CD8-positive, alpha-beta T cell (primary cell): ENCODE measurements at regions of chr9 and their contacts with region 1.

Region 1: DNA sequence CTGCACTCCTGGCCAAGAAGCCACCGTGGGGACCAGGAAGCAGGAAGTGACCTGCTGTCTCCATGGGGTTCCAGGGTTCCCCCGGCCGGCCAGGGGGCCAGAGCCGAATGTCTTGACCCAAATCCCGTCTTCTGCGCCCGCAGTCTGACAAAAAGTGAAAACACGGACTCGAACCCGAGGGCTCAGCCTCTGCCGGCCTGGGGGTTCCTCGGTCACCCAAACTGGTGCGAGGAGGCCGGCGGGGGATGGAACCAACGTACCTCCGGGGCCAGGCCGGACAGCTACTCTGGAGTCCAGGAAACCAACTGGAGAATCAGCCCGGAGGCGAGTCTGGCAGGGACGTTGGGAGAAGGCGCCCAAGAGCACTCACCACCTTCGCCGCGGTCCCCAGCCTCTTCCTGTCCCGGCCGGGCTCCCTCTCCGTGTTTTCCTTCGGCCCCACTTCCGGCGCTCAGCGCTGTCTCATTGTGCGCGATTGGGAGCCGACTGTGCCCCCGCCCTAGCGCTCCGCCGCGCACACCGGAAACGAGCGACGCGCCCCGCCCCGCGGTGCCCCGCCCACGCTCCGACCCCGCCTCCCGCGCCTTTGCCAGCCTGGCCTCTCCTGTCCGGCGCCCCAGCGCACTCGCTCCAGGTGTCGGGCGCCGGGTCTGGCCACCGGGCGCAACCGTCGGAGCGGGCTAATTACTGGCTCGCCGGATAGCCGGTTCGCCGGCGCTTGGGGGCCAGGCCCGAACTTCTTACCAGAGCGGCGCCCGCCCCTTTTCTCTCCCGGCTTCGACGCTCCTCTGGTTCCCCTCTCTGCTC is at the start of gene TUT7:
- DNase-seq: peak; percentile 86 to 97 (median 94)
- ATAC-seq: peak; percentile 93
- H3K4me3 ChIP-seq: peak within 1 kb of the TSS; percentile 83 to 87
- H3K4me3 Mint-ChIP-seq: peak within 1 kb of the TSS; percentile 97
- H3K27ac ChIP-seq: peak within 1 kb of the TSS; percentile 82 to 84
- H3K27ac Mint-ChIP-seq: peak within 1 kb of the TSS; percentile 95
- H3K4me1 ChIP-seq: peaks cover 21% of the 10 kb centered on the region
- H3K4me1 Mint-ChIP-seq: peaks cover 40% of the 10 kb centered on the region
- H3K27me3 ChIP-seq: no peaks in the 10 kb centered on the region
- H3K27me3 Mint-ChIP-seq: no peaks in the 10 kb centered on the region
- CTCF ChIP-seq: no peak
- total RNA-seq, gene TUT7: 48.9 to 55.7 TPM

Region 2: GRCh38 chr9:85741875-85742629 is 612.2 kb before region 1 on chr9 and contains the start of gene AGTPBP1:
- CTCF ChIA-PET with region 1: no interaction called
- POLR2A ChIA-PET with region 1: no interaction called
- intact Hi-C with region 1: loop called (anchors 1 to 2 kb)
- DNase-seq: peak; percentile 90 to 99 (median 97)
- ATAC-seq: peak; percentile 85
- H3K4me3 ChIP-seq: peak within 1 kb of the TSS; percentile 78 to 89
- H3K4me3 Mint-ChIP-seq: peak within 1 kb of the TSS; percentile 96
- H3K27ac ChIP-seq: peak within 1 kb of the TSS; percentile 83 to 93
- H3K27ac Mint-ChIP-seq: peak within 1 kb of the TSS; percentile 98
- H3K4me1 ChIP-seq: peaks cover 12% of the 10 kb centered on the region
- H3K4me1 Mint-ChIP-seq: peaks cover 40% of the 10 kb centered on the region
- H3K27me3 ChIP-seq: no peaks in the 10 kb centered on the region
- H3K27me3 Mint-ChIP-seq: no peaks in the 10 kb centered on the region
- CTCF ChIP-seq: no peak
- total RNA-seq, gene AGTPBP1: 58.3 to 58.4 TPM

Region 3: GRCh38 chr9:85940832-85941621 is 413.2 kb before region 1 on chr9 and contains the start of gene NAA35:
- CTCF ChIA-PET with region 1: no interaction called
- POLR2A ChIA-PET with region 1: no interaction called
- intact Hi-C with region 1: loop called (anchors 1 kb)
- DNase-seq: peak; percentile 98 to 99 (median 99)
- ATAC-seq: peak; percentile 87
- H3K4me3 ChIP-seq: peak within 1 kb of the TSS; percentile 62 to 76
- H3K4me3 Mint-ChIP-seq: peak within 1 kb of the TSS; percentile 89
- H3K27ac ChIP-seq: peak within 1 kb of the TSS; percentile 78 to 83
- H3K27ac Mint-ChIP-seq: peak within 1 kb of the TSS; percentile 91
- H3K4me1 ChIP-seq: peaks cover 34% of the 10 kb centered on the region
- H3K4me1 Mint-ChIP-seq: peaks cover 12% of the 10 kb centered on the region
- H3K27me3 ChIP-seq: no peaks in the 10 kb centered on the region
- H3K27me3 Mint-ChIP-seq: no peaks in the 10 kb centered on the region
- CTCF ChIP-seq: no peak
- total RNA-seq, gene NAA35: 19.8 to 24.0 TPM

Region 4: GRCh38 chr9:86303316-86303975 is 50.8 kb before region 1 on chr9:
- CTCF ChIA-PET with region 1: no interaction called
- POLR2A ChIA-PET with region 1: no interaction called
- intact Hi-C with region 1: loop called in 1 of 2 experiments (anchors 1 kb)
- DNase-seq: peak in 8 of 9 experiments; percentile 7 to 56 (median 42)
- ATAC-seq: peak; percentile 95
- H3K4me3 ChIP-seq: no peak overlapping the region
- H3K4me3 Mint-ChIP-seq: no peak overlapping the region
- H3K27ac ChIP-seq: no peak overlapping the region
- H3K27ac Mint-ChIP-seq: peak overlapping the region; percentile 72
- H3K4me1 ChIP-seq: peaks cover 8% of the 10 kb centered on the region
- H3K4me1 Mint-ChIP-seq: peaks cover 17% of the 10 kb centered on the region
- H3K27me3 ChIP-seq: no peaks in the 10 kb centered on the region
- H3K27me3 Mint-ChIP-seq: no peaks in the 10 kb centered on the region
- CTCF ChIP-seq: no peak

Region 5: DNA sequence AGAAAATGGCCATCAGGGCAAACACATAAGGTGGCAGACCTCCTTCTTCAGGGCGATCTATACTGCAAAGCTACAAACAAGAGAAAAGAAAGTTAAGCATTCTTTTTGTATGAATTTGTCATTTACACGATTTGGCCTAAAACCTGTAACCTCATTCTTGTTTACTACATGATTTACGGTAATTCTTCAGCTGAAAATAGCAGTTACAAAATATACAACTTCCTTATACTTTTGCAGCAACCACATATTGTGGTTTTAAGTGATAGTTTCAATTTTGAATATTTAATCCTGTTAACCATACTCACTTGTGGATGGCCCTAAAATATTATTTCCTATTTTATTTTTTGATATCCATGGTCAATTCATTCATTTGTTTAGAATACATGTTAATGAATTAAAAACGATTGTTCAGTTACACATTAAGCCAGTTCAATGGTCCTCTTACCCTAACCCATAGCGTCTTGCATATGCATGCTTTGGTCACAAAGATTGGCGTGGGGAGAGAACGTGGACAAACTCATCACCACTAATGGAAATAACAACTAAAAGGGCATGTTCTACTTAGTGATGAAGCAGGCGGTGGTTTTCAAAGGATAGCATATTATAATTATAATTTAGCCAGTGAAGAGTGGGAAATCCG is 16.6 kb before region 1 on chr9:
- CTCF ChIA-PET with region 1: no interaction called
- POLR2A ChIA-PET with region 1: no interaction called
- intact Hi-C with region 1: loop called (anchors 1 to 2 kb)
- DNase-seq: peak in 2 of 9 experiments; percentile 42 to 67
- ATAC-seq: peak; percentile 39
- H3K4me3 ChIP-seq: peak overlapping the region; percentile 34 to 36
- H3K4me3 Mint-ChIP-seq: peak overlapping the region; percentile 83
- H3K27ac ChIP-seq: peak overlapping the region; percentile 35 to 68
- H3K27ac Mint-ChIP-seq: peak overlapping the region; percentile 87
- H3K4me1 ChIP-seq: peaks cover 18% of the 10 kb centered on the region
- H3K4me1 Mint-ChIP-seq: peaks cover 44% of the 10 kb centered on the region
- H3K27me3 ChIP-seq: no peaks in the 10 kb centered on the region
- H3K27me3 Mint-ChIP-seq: no peaks in the 10 kb centered on the region
- CTCF ChIP-seq: no peak

Region 6: DNA sequence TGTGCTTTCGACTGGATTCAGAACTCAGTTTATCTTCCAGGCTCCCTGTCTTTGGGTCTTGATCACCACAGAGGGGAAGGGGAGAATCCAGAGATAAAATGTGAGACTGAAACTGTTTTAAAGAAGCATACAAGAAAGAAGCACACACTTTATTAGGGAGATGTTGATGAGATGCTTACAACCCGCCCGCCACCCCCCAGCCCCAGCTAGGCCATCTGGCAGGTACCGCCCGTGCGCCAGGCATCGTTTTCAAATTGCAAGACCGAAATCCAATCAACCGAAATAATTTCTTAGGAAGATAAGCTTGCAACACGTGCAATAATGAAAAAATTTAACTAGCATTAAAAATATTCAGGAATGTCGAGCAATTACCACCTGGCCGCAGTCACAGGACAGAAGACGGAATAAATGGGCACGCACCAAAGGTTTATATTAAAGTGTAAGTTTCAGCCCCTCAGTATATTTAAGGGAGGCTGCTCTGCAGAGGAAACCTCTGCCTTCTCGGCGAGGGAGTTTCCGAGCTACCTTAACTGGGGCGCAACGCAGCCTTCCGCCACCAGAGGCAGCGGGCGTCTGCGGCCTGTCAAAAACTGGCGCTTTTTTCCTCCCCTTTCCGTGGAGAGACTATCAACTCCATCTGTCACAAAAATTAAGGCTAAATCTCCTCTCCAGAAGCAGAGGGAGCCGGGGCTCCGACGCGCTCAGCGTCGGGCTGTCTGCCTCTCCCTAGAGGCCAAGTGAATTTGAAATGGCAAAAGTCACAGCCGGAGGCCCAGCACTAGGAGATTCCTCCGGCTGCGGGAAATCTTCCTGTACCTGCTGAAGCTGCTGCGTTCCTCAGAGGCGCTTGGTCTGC is 594.1 kb after region 1 on chr9:
- CTCF ChIA-PET with region 1: no interaction called
- POLR2A ChIA-PET with region 1: no interaction called
- intact Hi-C with region 1: loop called (anchors 2 kb)
- DNase-seq: peak; percentile 48 to 86 (median 71)
- ATAC-seq: peak; percentile 70
- H3K4me3 ChIP-seq: peak overlapping the region; percentile 52 to 79
- H3K4me3 Mint-ChIP-seq: peak overlapping the region; percentile 88
- H3K27ac ChIP-seq: no peak overlapping the region
- H3K27ac Mint-ChIP-seq: no peak overlapping the region
- H3K4me1 ChIP-seq: peaks cover 5% of the 10 kb centered on the region
- H3K4me1 Mint-ChIP-seq: peaks cover 18% of the 10 kb centered on the region
- H3K27me3 ChIP-seq: peaks cover 2 to 8% of the 10 kb centered on the region in 2 experiments
- H3K27me3 Mint-ChIP-seq: peaks cover 22% of the 10 kb centered on the region
- CTCF ChIP-seq: peak; percentile 80

Region 7: GRCh38 chr9:87973730-87974292 is 1619.6 kb after region 1 on chr9:
- CTCF ChIA-PET with region 1: no interaction called
- POLR2A ChIA-PET with region 1: no interaction called
- intact Hi-C with region 1: loop called in 1 of 2 experiments (anchors 2 kb)
- DNase-seq: no peak
- ATAC-seq: no peak
- H3K4me3 ChIP-seq: peak overlapping the region; percentile 81 to 83
- H3K4me3 Mint-ChIP-seq: peak overlapping the region; percentile 97
- H3K27ac ChIP-seq: peak overlapping the region; percentile 86 to 92
- H3K27ac Mint-ChIP-seq: peak overlapping the region; percentile 99
- H3K4me1 ChIP-seq: peaks cover 10% of the 10 kb centered on the region
- H3K4me1 Mint-ChIP-seq: peaks cover 30% of the 10 kb centered on the region
- H3K27me3 ChIP-seq: no peaks in the 10 kb centered on the region
- H3K27me3 Mint-ChIP-seq: no peaks in the 10 kb centered on the region
- CTCF ChIP-seq: no peak